Mammary epithelial cell (primary cell): ENCODE measurements at regions of chr10 and their contacts with region 1.

Region 1: DNA sequence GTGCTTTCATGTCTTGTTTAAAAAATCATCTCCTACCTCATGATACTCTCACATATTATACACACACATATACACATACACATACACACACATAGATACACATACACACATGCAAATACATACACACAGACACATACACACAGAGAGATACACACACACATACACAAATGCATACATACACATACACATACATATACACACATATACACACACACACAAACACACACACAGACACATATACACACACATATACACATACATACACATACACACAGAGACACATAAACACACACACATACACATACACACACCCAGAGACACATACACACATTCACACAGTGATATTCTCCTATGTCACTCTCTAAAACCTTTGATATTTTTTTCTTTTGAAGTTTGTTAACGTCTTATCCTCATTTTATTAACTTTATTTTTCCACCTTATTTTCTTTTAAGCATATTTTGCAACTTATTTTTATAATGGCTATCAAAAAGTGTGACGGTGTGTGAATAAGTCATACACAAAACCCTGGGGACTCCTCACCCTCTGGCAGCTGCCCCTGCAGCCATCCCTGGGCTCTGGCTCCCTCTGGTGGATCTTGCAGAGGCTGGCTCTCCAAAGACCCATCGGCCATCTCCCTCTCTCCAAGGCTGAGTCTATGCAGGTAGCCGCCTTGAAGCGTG is 3.9 kb upstream of the C10orf120 start:
- DNase-seq: peak; percentile 65
- H3K4me3 ChIP-seq: no peak overlapping the region
- H3K27ac ChIP-seq: no peak overlapping the region
- H3K4me1 ChIP-seq: no peaks in the 10 kb centered on the region
- H3K27me3 ChIP-seq: no peaks in the 10 kb centered on the region
- CTCF ChIP-seq: peak; percentile 93 to 97

Region 2: DNA sequence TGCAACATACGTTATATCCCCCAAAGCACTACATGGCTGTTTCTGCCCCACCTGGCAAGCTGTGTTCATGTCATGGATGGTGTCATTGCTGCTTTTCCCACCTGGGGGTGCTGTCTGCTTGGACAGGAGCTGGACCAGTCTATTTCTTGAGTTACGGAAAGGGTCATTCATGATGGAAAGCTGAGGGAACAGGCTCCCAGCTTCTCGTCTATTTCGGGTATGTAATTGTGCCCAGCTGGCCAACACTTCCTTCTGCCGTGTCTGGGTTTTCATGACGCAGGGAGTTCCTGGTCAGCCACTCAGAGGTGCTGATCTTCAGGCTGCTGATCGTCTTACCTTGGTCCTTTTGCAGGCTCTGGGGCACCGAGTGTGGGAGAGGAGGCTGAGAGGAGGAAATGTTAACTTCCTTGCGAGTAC is 423.8 kb before region 1 on chr10:
- CTCF ChIA-PET with region 1: no interaction called
- dilution Hi-C with region 1: no loop called
- in situ Hi-C with region 1: loop called (anchors 10 to 25 kb)
- intact Hi-C with region 1: loop called (anchors 1 kb)
- DNase-seq: peak; percentile 46
- H3K4me3 ChIP-seq: no peak overlapping the region
- H3K27ac ChIP-seq: no peak overlapping the region
- H3K4me1 ChIP-seq: peaks cover 16% of the 10 kb centered on the region
- H3K27me3 ChIP-seq: no peaks in the 10 kb centered on the region
- CTCF ChIP-seq: peak; percentile 83 to 93

Region 3: GRCh38 chr10:122298598-122299301 is 404.8 kb before region 1 on chr10:
- CTCF ChIA-PET with region 1: no interaction called
- dilution Hi-C with region 1: no loop called
- in situ Hi-C with region 1: loop called in 1 of 2 experiments (anchors 25 kb)
- intact Hi-C with region 1: loop called (anchors 1 kb)
- DNase-seq: peak; percentile 60
- H3K4me3 ChIP-seq: peak overlapping the region in 1 of 3 experiments; percentile 4
- H3K27ac ChIP-seq: no peak overlapping the region
- H3K4me1 ChIP-seq: peaks cover 16% of the 10 kb centered on the region
- H3K27me3 ChIP-seq: no peaks in the 10 kb centered on the region
- CTCF ChIP-seq: peak; percentile 92 to 98

Region 4: GRCh38 chr10:122435212-122435827 is 268.3 kb before region 1 on chr10:
- CTCF ChIA-PET with region 1: no interaction called
- dilution Hi-C with region 1: no loop called
- in situ Hi-C with region 1: no loop called
- intact Hi-C with region 1: loop called (anchors 5 kb)
- DNase-seq: no peak
- H3K4me3 ChIP-seq: no peak overlapping the region
- H3K27ac ChIP-seq: no peak overlapping the region
- H3K4me1 ChIP-seq: no peaks in the 10 kb centered on the region
- H3K27me3 ChIP-seq: no peaks in the 10 kb centered on the region
- CTCF ChIP-seq: peak; percentile 44 to 54

Region 5: DNA sequence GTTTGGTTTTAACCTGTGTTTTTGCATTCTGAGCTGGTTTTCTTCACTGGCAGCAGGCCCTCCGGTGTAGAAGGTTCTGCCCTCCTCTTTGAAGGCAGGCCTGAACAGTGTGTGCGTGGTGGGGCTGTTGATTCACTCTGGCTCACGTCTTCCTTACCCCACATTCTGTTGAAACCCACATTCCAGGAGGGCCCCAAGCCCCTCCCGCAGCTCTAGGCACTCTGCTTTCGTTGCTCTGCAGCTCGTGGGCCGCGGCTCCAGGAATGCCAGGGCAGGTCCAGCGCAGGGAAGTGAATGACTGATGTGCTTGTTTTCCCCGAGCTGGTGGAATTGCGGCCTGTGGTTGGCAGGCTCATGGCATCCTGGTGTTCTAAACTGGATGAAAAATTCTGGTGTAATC is 193.3 kb before region 1 on chr10:
- CTCF ChIA-PET with region 1: no interaction called
- dilution Hi-C with region 1: no loop called
- in situ Hi-C with region 1: no loop called
- intact Hi-C with region 1: loop called (anchors 2 kb)
- DNase-seq: peak; percentile 98
- H3K4me3 ChIP-seq: no peak overlapping the region
- H3K27ac ChIP-seq: peak overlapping the region; percentile 83
- H3K4me1 ChIP-seq: peaks cover 39% of the 10 kb centered on the region
- H3K27me3 ChIP-seq: no peaks in the 10 kb centered on the region
- CTCF ChIP-seq: no peak

Region 6: GRCh38 chr10:122648599-122649428 is 54.8 kb before region 1 on chr10:
- CTCF ChIA-PET with region 1: no interaction called
- dilution Hi-C with region 1: no loop called
- in situ Hi-C with region 1: loop called in 1 of 2 experiments (anchors 10 kb)
- intact Hi-C with region 1: loop called (anchors 1 kb)
- DNase-seq: peak; percentile 16
- H3K4me3 ChIP-seq: no peak overlapping the region
- H3K27ac ChIP-seq: no peak overlapping the region
- H3K4me1 ChIP-seq: no peaks in the 10 kb centered on the region
- H3K27me3 ChIP-seq: no peaks in the 10 kb centered on the region
- CTCF ChIP-seq: peak; percentile 87

Region 7: GRCh38 chr10:122786269-122786668 is 82.7 kb after region 1 on chr10:
- CTCF ChIA-PET with region 1: no interaction called
- dilution Hi-C with region 1: no loop called
- in situ Hi-C with region 1: no loop called
- intact Hi-C with region 1: no loop called
- DNase-seq: peak; percentile 30
- H3K4me3 ChIP-seq: no peak overlapping the region
- H3K27ac ChIP-seq: no peak overlapping the region
- H3K4me1 ChIP-seq: no peaks in the 10 kb centered on the region
- H3K27me3 ChIP-seq: no peaks in the 10 kb centered on the region
- CTCF ChIP-seq: no peak